ENCODE measurements at regions of chr12 and their contacts with region 1.

Region 1: DNA sequence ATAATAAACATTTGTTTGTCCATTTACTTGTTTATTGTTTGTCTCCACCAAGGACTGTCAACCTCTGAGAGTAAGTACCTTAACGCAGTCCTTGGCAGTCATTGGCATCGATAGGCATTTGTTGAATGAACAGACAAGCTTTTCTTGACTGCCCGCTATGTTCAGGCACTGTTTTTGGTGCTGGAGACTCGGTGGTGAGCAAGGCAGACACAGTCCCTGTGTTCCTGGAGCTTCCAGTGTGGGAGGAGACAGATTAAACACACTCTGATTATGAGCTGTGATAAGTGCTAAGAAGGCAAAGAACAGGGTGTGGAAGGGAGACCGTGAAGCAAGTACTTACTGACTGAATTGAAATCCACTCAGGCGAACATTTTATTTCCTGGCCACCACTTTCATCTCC is 1.2 kb downstream of the ATP6V0A2 start:
- DNase-seq: peak; percentile 42
- H3K4me3 ChIP-seq: peak overlapping the region; percentile 79 to 100 (median 98)
- H3K27ac ChIP-seq: no peak overlapping the region
- H3K4me1 ChIP-seq: peaks cover 4% of the 10 kb centered on the region
- H3K27me3 ChIP-seq: no peaks in the 10 kb centered on the region
- CTCF ChIP-seq: no peak

Region 2: GRCh38 chr12:123633379-123634141 is 79.8 kb before region 1 on chr12 and contains the starts of genes EIF2B1 and GTF2H3:
- CTCF ChIA-PET with region 1: interaction called, 4 read pairs
- dilution Hi-C with region 1: no loop called
- in situ Hi-C with region 1: no loop called
- intact Hi-C with region 1: loop called (anchors 5 kb)
- DNase-seq: peak; percentile 97
- H3K4me3 ChIP-seq: peak within 1 kb of the TSS; percentile 73 to 90 (median 78)
- H3K27ac ChIP-seq: peak within 1 kb of the TSS; percentile 84
- H3K4me1 ChIP-seq: peaks cover 7% of the 10 kb centered on the region
- H3K27me3 ChIP-seq: no peaks in the 10 kb centered on the region
- CTCF ChIP-seq: no peak
- total RNA-seq, gene EIF2B1: 32.0 to 42.5 TPM
- total RNA-seq, gene GTF2H3: 58.7 to 64.9 TPM

Region 3: DNA sequence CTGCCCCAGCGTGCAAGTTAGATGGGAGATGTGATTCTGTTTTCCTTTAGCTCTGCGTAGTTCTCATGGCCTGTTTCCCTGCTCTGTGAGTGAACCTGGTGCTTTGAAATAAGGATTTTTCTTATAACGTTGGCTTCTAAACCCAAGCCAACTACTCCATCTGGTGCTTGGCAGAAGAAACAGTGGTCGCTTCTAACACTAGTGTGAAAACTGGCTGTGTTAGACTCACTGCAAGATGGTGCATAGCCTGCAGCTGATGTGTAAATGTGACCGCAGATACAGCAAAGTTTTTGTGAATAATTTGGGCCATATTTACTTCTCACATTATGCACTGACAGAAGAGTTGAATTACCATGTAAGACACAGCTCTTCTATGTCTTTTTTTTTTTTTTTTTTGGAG is 67.5 kb before region 1 on chr12:
- CTCF ChIA-PET with region 1: no interaction called
- dilution Hi-C with region 1: no loop called
- in situ Hi-C with region 1: no loop called
- intact Hi-C with region 1: no loop called
- DNase-seq: no peak
- H3K4me3 ChIP-seq: no peak overlapping the region
- H3K27ac ChIP-seq: no peak overlapping the region
- H3K4me1 ChIP-seq: no peaks in the 10 kb centered on the region
- H3K27me3 ChIP-seq: no peaks in the 10 kb centered on the region
- CTCF ChIP-seq: no peak

Region 4: GRCh38 chr12:123670882-123671728 is 42.3 kb before region 1 on chr12 and contains the start of gene TCTN2:
- CTCF ChIA-PET with region 1: no interaction called
- dilution Hi-C with region 1: loop called (anchors 5 kb)
- in situ Hi-C with region 1: no loop called
- intact Hi-C with region 1: loop called (anchors 5 kb)
- DNase-seq: peak; percentile 85
- H3K4me3 ChIP-seq: peak within 1 kb of the TSS; percentile 64 to 82 (median 70)
- H3K27ac ChIP-seq: peak within 1 kb of the TSS; percentile 43
- H3K4me1 ChIP-seq: peaks cover 17% of the 10 kb centered on the region
- H3K27me3 ChIP-seq: no peaks in the 10 kb centered on the region
- CTCF ChIP-seq: no peak
- total RNA-seq, gene TCTN2: 8.8 to 19.2 TPM

Region 5: GRCh38 chr12:123772074-123772473 is 58.7 kb after region 1 on chr12:
- CTCF ChIA-PET with region 1: no interaction called
- dilution Hi-C with region 1: loop called (anchors 10 kb)
- in situ Hi-C with region 1: no loop called
- intact Hi-C with region 1: no loop called
- DNase-seq: no peak
- H3K4me3 ChIP-seq: no peak overlapping the region
- H3K27ac ChIP-seq: no peak overlapping the region
- H3K4me1 ChIP-seq: no peaks in the 10 kb centered on the region
- H3K27me3 ChIP-seq: no peaks in the 10 kb centered on the region
- CTCF ChIP-seq: no peak

Region 6: DNA sequence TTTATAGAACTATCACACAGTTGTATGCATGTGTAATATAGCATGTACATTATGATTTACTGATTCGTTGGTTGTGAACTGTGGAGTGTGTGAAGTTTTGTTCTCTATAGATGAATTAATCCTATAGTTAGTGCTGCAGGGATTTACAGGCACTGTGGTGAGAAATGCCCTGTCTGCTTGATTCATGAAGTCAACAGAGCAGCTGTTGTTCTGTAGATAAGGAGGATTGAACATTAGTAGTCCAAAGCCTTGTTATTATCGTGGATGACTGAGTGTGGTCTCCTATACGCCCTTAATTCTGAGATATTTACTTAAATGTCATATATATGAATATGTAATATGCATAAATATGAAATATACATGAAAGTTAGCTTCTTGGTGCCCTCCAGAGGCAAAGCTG is 147.0 kb after region 1 on chr12:
- CTCF ChIA-PET with region 1: no interaction called
- dilution Hi-C with region 1: loop called (anchors 5 kb)
- in situ Hi-C with region 1: no loop called
- intact Hi-C with region 1: no loop called
- DNase-seq: no peak
- H3K4me3 ChIP-seq: no peak overlapping the region
- H3K27ac ChIP-seq: no peak overlapping the region
- H3K4me1 ChIP-seq: no peaks in the 10 kb centered on the region
- H3K27me3 ChIP-seq: peaks cover 2% of the 10 kb centered on the region
- CTCF ChIP-seq: peak in 1 of 2 donors; percentile 8

Region 7: DNA sequence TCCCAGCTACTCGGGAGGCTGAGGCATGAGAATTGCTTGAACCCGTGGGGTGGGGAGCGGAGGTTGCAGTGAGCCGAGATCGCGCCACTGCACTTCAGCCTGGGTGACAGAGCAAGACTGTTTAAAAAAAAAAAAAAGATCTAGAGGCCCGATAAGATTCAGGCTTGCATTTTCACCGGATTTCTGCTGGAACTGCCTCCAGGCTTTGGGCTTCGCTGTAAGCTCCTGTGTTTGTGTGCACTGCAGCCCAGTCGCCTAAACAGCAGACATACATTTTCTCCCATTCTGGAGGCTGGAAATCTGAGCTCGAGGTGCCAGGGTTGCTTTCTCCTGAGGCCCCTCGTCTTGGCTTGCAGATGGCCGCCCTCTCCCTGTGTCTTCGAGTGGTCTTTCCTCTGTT is 1292.3 kb after region 1 on chr12:
- CTCF ChIA-PET with region 1: no interaction called
- dilution Hi-C with region 1: no loop called
- in situ Hi-C with region 1: no loop called
- intact Hi-C with region 1: no loop called
- DNase-seq: no peak
- H3K4me3 ChIP-seq: no peak overlapping the region
- H3K27ac ChIP-seq: no peak overlapping the region
- H3K4me1 ChIP-seq: no peaks in the 10 kb centered on the region
- H3K27me3 ChIP-seq: no peaks in the 10 kb centered on the region
- CTCF ChIP-seq: no peak